Heart right ventricle (tissue), 16 donors: ENCODE measurements at regions of chr7 and their contacts with region 1.

Region 1: GRCh38 chr7:44595934-44596635 is 10.3 kb upstream of the OGDH start:
- DNase-seq: peak in 1 of 2 donors; percentile 14
- ATAC-seq: peak; percentile 71 to 97 (median 88)
- H3K4me3 ChIP-seq: no peak overlapping the region
- H3K27ac ChIP-seq: peak overlapping the region; percentile 23 to 77 (median 72)
- H3K4me1 ChIP-seq: peaks cover 0 to 13% (median 8%) of the 10 kb centered on the region in 9 donors
- H3K27me3 ChIP-seq: no peaks in the 10 kb centered on the region
- CTCF ChIP-seq: peak in 2 of 9 donors; percentile 11 to 12

Region 2: GRCh38 chr7:44547536-44548231 is 48.4 kb before region 1 on chr7:
- intact Hi-C with region 1: no loop called
- DNase-seq: no peak
- ATAC-seq: no peak
- H3K4me3 ChIP-seq: no peak overlapping the region
- H3K27ac ChIP-seq: no peak overlapping the region
- H3K4me1 ChIP-seq: no peaks in the 10 kb centered on the region
- H3K27me3 ChIP-seq: no peaks in the 10 kb centered on the region
- CTCF ChIP-seq: no peak

Region 3: DNA sequence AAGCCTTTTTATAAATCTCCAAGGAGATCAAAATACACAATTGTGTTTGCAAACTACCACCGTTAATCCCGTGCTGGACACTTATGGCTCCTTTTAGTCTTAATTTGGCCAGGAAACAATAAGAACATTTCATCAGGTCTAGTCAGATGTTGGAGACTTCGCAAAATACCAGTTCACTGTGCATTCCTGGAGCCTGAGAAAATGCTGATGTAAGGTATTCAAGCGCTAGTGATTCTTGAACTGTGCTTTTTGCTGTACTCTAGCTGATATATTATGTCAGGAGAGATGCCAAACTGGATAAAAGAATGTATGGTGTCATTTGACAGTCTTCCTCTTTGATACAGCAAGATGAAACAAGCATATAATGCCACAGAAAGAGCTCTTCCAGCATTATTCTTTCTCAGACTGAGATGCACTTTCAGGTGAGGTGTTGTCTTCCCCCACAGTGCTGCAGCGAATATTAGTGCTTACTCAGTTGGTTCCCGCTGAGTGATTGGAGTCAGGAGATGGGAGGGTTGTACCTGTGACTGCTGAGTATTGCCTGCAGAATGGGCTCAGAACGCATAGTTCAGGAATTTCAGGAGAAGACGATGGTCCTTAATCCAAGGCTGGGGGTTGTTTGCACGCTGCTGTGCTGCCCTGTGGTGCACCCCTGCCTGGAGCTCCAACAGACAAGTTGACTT is 69.6 kb after region 1 on chr7:
- intact Hi-C with region 1: loop called in 1 of 10 experiments (anchors 2 kb)
- DNase-seq: no peak
- ATAC-seq: no peak
- H3K4me3 ChIP-seq: no peak overlapping the region
- H3K27ac ChIP-seq: no peak overlapping the region
- H3K4me1 ChIP-seq: peaks cover 0 to 13% (median 0%) of the 10 kb centered on the region in 9 donors
- H3K27me3 ChIP-seq: no peaks in the 10 kb centered on the region
- CTCF ChIP-seq: no peak

Region 4: GRCh38 chr7:44914992-44915607 is 319.0 kb after region 1 on chr7:
- intact Hi-C with region 1: loop called in 1 of 10 experiments (anchors 10 kb)
- DNase-seq: no peak
- ATAC-seq: no peak
- H3K4me3 ChIP-seq: no peak overlapping the region
- H3K27ac ChIP-seq: no peak overlapping the region
- H3K4me1 ChIP-seq: no peaks in the 10 kb centered on the region
- H3K27me3 ChIP-seq: no peaks in the 10 kb centered on the region
- CTCF ChIP-seq: no peak